Activated CD8-positive, alpha-beta T cell treated with anti-CD3 and anti-CD28 coated beads, Interleukin-2, amount 10 ng/mL, durations not matched to agents 7 days and 5 days (primary cell): ENCODE measurements at regions of chr1 and their contacts with region 1.

Region 1: GRCh38 chr1:202968840-202969295 is 1.8 kb upstream of the CYB5R1 start:
- DNase-seq: peak; percentile 60
- ATAC-seq: peak; percentile 54
- H3K4me3 Mint-ChIP-seq: no peak overlapping the region
- H3K27ac Mint-ChIP-seq: peak overlapping the region; percentile 44
- H3K4me1 Mint-ChIP-seq: peaks cover 30% of the 10 kb centered on the region
- H3K27me3 Mint-ChIP-seq: peaks cover 4% of the 10 kb centered on the region

Region 2: DNA sequence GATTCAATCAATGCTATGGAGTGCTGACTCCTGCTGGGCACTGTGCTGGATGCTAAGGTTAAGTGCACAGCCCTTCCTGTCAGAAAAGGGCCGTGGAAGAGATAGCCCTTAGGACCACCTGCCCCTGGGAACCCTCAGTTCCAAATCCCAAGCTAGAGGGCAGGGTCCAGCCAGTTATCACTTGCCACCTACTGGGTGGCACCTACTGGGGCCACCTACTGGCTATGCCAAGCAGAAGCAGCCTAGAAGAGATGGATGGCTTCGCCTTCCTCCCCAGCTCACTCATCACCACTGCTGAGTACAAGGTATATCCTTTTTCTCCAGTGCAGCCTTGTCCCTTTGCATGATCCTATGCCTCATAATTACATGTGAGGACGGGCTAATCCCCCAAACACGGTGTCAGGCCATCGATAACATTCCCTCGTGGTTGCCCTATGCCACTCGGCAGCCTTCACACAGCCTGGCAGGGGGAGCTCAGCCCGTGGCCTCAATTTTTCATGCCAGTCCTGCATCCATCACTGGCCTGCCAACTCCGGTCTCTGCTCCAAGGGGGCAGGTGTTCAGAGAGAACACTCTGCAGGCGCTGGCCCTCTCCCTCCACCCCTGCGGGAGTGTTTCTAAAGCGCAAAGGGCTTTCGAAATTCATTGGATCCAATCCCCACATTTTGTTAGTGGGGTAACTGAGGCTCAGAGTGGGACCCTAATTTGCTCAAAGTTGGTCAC is 307.6 kb before region 1 on chr1:
- CTCF ChIA-PET with region 1: no interaction called
- POLR2A ChIA-PET with region 1: no interaction called
- DNase-seq: no peak
- ATAC-seq: no peak
- H3K4me3 Mint-ChIP-seq: no peak overlapping the region
- H3K27ac Mint-ChIP-seq: no peak overlapping the region
- H3K4me1 Mint-ChIP-seq: no peaks in the 10 kb centered on the region
- H3K27me3 Mint-ChIP-seq: peaks cover 25% of the 10 kb centered on the region

Region 3: DNA sequence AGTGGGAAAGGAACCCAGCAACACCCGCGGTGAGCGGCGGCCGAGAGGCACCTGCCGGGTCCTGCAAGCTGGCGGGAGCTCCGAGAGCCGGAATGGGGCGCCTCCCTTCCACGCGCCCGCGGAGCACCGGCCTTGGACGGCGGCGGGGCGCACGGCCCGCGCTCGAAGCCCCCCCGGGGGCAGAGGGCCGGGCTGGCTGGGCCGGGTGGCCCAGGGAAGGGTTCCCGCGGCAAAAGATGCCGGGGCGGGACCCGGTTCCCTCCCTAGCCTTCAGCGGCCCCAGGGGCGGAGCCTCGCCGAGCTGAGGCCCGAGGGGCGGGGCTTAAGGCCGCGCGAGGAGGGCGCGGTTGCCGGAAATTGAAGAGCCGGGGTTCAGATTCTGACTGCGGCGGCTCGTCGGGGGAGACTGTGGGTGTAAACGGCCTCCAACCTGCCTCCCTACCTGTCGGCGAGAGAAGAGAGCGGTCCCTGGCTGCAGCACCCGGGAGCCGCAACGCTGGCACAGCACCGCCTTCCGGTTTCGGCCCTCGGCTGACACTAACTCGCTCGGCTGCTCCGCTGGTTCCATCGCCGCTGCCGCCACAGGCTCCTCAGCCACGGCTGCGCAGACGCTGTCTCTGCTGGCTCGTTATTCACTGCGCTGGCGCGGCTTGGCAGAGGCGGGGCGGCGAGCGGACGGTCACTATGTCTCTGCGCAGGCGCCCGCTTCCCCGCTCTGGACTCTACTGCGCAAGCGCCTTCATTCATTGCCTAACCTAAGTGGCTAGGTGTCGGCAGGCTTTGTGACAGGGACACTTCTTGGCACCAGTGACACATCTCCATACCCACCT is 80.1 kb before region 1 on chr1 and contains the start of gene RABIF:
- CTCF ChIA-PET with region 1: interaction called, 4 read pairs
- POLR2A ChIA-PET with region 1: interaction called, 10 read pairs
- DNase-seq: peak; percentile 97
- ATAC-seq: peak; percentile 96
- H3K4me3 Mint-ChIP-seq: peak within 1 kb of the TSS; percentile 94
- H3K27ac Mint-ChIP-seq: peak within 1 kb of the TSS; percentile 98
- H3K4me1 Mint-ChIP-seq: peaks cover 19% of the 10 kb centered on the region
- H3K27me3 Mint-ChIP-seq: no peaks in the 10 kb centered on the region
- total RNA-seq, gene RABIF: 13.6 TPM

Region 4: GRCh38 chr1:203069030-203069747 is 100.3 kb after region 1 on chr1:
- CTCF ChIA-PET with region 1: no interaction called
- POLR2A ChIA-PET with region 1: no interaction called
- DNase-seq: no peak
- ATAC-seq: no peak
- H3K4me3 Mint-ChIP-seq: no peak overlapping the region
- H3K27ac Mint-ChIP-seq: no peak overlapping the region
- H3K4me1 Mint-ChIP-seq: peaks cover 3% of the 10 kb centered on the region
- H3K27me3 Mint-ChIP-seq: peaks cover 3% of the 10 kb centered on the region

Region 5: DNA sequence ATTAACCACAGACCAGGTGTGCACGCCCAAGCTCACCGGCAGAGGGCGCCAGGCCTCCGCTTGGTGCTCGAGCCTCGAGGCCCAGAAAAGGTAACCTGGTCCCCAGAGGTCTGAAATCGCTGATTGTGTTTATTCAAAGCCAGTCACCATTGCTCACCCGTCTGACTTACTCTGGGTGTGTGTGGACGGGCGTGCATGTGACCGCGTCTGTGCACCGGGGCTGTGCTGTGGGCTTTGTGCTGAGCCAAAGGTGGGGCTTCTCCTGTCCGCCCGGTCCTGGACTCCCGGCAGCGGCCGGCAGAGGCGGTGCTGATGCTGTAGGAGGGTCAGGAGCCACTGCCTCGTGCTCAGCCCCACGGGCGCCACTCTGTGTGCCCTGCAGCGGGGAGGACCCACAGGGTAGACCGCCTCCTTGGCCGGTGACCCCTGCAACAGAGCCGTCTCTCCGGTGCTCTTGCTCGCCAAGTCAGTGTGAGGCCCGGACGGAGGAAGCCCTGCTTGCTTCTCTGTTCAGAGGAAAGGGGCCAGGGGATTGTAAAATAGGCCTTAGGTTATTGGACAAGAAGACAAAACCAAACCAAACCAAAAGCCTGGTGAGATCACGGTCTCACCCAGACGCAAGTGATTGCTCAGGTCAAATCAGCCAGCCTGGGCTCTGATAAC is 304.5 kb after region 1 on chr1:
- CTCF ChIA-PET with region 1: no interaction called
- POLR2A ChIA-PET with region 1: no interaction called
- DNase-seq: peak; percentile 93
- ATAC-seq: peak; percentile 75
- H3K4me3 Mint-ChIP-seq: peak overlapping the region; percentile 70
- H3K27ac Mint-ChIP-seq: peak overlapping the region; percentile 82
- H3K4me1 Mint-ChIP-seq: peaks cover 75% of the 10 kb centered on the region
- H3K27me3 Mint-ChIP-seq: no peaks in the 10 kb centered on the region